ENCODE measurements at regions of chrX and their contacts with region 1.

Region 1: DNA sequence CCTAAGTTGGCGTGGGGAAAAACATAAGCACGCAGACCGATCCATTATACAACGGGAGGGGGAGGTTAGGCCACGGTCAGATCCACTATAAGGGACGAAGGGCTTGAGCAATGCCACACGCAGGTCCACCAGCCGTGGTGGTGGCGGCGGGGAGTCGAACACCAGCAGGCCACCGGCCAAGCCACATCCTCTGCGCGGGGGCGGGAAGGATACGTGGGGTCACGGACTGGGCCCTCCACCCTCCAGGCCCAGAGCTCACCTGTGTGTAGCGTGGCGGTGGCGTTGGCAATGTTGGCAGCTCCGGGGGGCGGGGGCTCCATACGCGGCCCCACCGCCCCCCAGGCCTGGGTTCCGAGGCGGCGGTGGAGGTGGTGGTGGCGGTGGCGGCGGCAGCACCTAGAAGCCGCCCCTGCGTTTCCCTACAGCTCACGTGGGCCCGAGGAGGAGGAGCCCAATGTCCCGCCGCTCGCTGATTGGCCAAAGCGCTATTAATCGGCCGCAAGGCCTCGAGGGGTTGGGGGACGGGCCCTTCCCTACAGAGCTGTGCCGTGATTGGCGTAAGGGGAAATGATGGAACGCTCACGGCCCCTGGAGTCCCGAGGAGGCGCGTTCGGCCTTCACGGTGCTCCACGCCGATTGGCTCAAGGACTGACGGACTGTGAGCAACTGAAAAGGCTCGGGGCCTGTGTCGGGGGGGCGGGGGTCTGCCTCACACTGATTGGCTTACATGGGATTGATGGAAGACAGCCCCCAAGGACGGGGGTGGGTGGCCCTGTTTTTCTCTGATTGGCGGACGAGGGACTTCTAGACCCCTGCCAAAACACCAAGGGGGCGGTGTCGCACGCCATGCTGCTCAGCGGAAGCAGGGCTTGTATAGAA is at the start of gene ELK1:
- DNase-seq: peak; percentile 96
- total RNA-seq, gene ELK1: 38.2 TPM

Region 2: DNA sequence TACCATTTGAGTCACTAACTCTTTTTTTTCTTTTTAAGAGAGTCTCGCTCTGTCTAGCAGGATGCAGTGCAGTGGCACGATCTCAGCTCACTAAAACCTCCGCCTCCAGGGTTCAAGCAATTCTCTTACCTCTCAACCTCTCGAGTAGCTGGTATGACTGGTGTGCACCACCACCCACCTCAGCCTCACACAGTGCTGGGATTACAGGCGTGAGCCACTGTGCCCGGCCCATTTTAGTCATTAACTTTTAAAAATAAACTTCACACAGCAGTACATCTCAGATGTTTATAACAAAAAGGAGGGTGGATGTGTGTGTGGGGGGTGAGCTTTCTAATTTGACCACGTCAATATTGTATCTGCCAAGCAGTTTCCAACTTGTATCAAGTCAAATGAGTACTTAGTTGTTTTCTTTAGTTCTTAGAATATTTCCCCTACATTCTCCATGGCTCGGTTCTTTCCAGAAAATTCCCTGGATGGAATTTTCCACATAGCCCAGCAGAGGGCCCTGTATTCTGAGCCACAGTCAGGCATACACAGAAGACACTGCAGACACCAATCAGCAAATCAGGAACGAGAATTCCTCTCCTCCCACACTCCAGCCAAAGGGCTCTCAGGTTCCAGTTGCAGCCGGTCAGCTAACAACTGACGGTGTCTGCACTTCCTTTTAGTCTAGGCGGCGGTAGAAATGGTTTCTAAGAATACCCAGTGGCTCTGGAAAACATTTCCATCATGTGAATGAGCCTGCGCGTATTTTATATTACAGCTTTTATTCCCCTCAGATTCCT is 109.5 kb before region 1 on chrX:
- intact Hi-C with region 1: loop called (anchors 5 kb)
- DNase-seq: peak; percentile 83

Region 3: GRCh38 chrX:48021026-48021900 is 370.9 kb after region 1 on chrX:
- intact Hi-C with region 1: loop called (anchors 10 kb)
- DNase-seq: peak; percentile 86

Measured in cardiac septum (tissue), 1 donor.